ENCODE measurements at regions of chr4 and their contacts with region 1.

Region 1: GRCh38 chr4:34534916-34535315 is 1709.4 kb downstream of the ARAP2 start:
- DNase-seq: no peak
- H3K4me3 ChIP-seq: no peak overlapping the region
- CTCF ChIP-seq: no peak
- POLR2A ChIP-seq: no peak

Region 2: GRCh38 chr4:34861661-34862060 is 326.7 kb after region 1 on chr4:
- intact Hi-C with region 1: no loop called
- DNase-seq: no peak
- H3K4me3 ChIP-seq: no peak overlapping the region
- CTCF ChIP-seq: no peak
- POLR2A ChIP-seq: no peak

Region 3: GRCh38 chr4:35653451-35653850 is 1118.5 kb after region 1 on chr4:
- intact Hi-C with region 1: loop called (anchors 5 kb)
- DNase-seq: no peak
- H3K4me3 ChIP-seq: no peak overlapping the region
- CTCF ChIP-seq: no peak
- POLR2A ChIP-seq: no peak

Measured in lower leg skin (tissue), 4 donors.